ENCODE measurements at regions of chr15 and their contacts with region 1.

Region 1: GRCh38 chr15:68304589-68305337 is 27.2 kb downstream of the FEM1B start:
- DNase-seq: no peak
- ATAC-seq: peak; percentile 57
- H3K4me3 ChIP-seq: no peak overlapping the region
- H3K27ac ChIP-seq: no peak overlapping the region
- H3K4me1 ChIP-seq: no peaks in the 10 kb centered on the region
- H3K27me3 ChIP-seq: no peaks in the 10 kb centered on the region
- CTCF ChIP-seq: no peak

Region 2: DNA sequence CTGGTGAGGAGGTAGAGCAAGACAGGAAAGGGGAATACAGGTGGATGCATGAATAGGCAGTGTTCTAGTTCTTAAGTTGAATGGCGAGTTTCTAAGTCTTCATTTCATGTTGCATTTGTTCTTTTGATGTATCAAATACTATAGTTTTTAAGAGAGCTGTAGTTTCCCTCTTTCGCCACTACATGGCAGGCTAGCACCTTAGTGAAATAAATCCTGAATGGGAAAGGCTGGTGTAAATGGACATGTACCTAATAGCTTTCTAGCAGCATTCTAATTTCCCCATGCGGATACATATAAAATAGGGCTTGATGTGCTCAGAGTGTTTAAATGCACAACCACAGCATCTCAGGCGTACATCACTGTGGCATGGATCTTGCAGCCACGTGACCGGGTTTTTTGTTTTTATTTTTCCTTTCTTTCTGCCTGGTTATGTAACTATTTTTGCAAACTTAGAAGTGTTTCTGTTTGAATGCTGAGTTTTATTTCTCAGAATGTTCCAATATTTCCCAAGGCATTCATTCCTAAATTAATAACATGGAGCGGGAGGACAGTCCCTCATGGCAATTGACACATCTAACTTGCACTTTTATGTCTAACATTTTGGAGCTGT is 51.7 kb before region 1 on chr15:
- CTCF ChIA-PET with region 1: interaction called, 39 read pairs
- POLR2A ChIA-PET with region 1: no interaction called
- in situ Hi-C with region 1: no loop called
- intact Hi-C with region 1: loop called (anchors 1 kb)
- DNase-seq: no peak
- ATAC-seq: peak; percentile 55
- H3K4me3 ChIP-seq: no peak overlapping the region
- H3K27ac ChIP-seq: no peak overlapping the region
- H3K4me1 ChIP-seq: peaks cover 6% of the 10 kb centered on the region; the same call in 1 of the 2 replicates
- H3K27me3 ChIP-seq: no peaks in the 10 kb centered on the region; the same call in 1 of the 2 replicates
- CTCF ChIP-seq: peak; percentile 87

Region 3: GRCh38 chr15:68383161-68384074 is 78.7 kb after region 1 on chr15:
- CTCF ChIA-PET with region 1: interaction called, 4 read pairs
- POLR2A ChIA-PET with region 1: no interaction called
- in situ Hi-C with region 1: no loop called
- intact Hi-C with region 1: loop called (anchors 5 kb)
- DNase-seq: no peak
- ATAC-seq: no peak
- H3K4me3 ChIP-seq: no peak overlapping the region
- H3K27ac ChIP-seq: no peak overlapping the region
- H3K4me1 ChIP-seq: no peaks in the 10 kb centered on the region
- H3K27me3 ChIP-seq: no peaks in the 10 kb centered on the region
- CTCF ChIP-seq: peak; percentile 49

Region 4: GRCh38 chr15:68550481-68551295 is 245.9 kb after region 1 on chr15:
- CTCF ChIA-PET with region 1: interaction called, 9 read pairs
- POLR2A ChIA-PET with region 1: no interaction called
- in situ Hi-C with region 1: no loop called
- intact Hi-C with region 1: loop called (anchors 5 kb)
- DNase-seq: peak; percentile 38
- ATAC-seq: peak; percentile 59; the same call in 1 of the 2 replicates
- H3K4me3 ChIP-seq: no peak overlapping the region
- H3K27ac ChIP-seq: no peak overlapping the region
- H3K4me1 ChIP-seq: no peaks in the 10 kb centered on the region; the same call in 1 of the 2 replicates
- H3K27me3 ChIP-seq: no peaks in the 10 kb centered on the region
- CTCF ChIP-seq: peak; percentile 94

Region 5: DNA sequence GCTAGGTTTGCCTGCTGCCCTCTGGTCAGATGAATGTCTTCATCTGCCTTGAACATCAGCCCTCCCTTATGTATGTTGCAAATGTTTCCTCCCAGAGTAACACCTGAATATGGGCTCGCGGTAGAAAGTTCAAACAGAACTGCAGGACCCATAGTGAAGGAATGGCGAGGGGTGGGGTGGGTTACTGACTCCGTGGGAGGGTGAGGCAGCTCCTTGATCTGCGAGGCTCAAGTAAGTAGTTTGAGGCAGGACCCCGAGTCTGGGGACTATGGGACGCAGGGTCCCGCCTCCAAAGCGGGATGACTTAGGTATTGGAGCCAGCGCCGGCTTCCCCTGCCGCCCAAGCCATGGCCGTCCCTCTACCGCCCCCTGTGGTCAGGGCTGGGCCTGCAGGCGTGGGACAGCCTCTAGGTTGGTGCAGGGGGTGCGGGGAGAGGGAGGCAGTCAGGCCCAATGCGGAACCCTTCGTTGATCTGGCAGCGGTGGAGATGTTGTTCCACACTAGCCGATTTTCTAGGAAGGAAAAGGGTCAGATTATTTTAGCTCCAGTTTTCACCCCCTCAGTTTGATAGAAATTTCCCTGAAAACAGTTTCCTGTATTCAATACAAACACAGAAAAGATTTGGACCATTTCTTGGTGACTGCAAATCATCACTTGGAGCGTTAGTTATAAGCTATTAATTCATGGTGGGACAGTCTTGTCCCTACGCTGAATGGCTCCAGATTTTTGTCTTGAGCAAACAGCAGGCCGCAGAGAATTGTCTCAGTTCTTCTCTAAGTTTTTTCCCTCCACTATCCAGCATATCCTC is 346.3 kb after region 1 on chr15:
- CTCF ChIA-PET with region 1: interaction called, 15 read pairs
- POLR2A ChIA-PET with region 1: no interaction called
- in situ Hi-C with region 1: no loop called
- intact Hi-C with region 1: no loop called
- DNase-seq: no peak
- ATAC-seq: peak; percentile 99
- H3K4me3 ChIP-seq: peak overlapping the region in 1 of 2 experiments; percentile 42; a peak in 2 of 4 replicates
- H3K27ac ChIP-seq: no peak overlapping the region
- H3K4me1 ChIP-seq: no peaks in the 10 kb centered on the region
- H3K27me3 ChIP-seq: no peaks in the 10 kb centered on the region
- CTCF ChIP-seq: peak; percentile 97